PC-9 (cell line): ENCODE measurements at regions of chr11 and their contacts with region 1.

Region 1: DNA sequence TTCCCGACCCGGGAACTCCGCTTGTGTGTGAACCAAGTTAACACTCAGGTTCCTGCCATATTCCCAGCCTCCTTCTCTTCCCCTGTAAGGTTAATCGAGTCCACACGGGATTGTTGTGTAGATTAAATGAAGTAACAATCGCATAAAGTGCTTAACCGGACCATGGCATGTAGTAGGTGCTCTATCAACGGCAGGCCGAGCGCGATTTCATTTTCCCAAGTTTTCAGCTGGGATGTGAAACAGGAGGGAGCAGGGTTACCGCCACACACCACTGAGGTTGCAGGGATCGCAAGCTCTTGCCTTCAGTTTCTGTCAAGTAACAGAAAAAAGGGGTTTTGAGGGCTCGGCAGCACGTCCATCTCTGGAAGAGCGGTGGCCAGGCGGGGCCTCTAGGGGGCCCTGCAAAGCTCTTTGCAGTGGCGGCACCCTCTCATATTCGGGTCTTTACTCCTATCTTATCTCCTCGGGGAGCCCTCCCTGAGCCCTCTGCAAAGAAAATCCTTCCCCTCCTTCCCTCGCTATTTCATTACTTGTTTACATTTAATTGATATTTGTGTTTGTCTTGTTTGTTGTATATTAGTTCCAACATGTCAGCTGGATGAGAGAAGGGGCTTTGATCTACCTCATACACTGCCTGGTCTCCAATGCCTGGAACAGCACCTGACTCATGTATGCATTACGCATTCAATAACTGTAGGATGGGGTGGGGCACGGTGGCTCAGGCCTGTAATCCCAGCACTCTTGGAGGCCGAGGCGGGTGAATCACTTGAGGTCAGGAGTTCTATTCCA is 818 bp upstream of the PLEKHA7 start:
- DNase-seq: peak; percentile 57 to 88
- H3K4me3 ChIP-seq: peak overlapping the region; percentile 89
- H3K27ac ChIP-seq: peak overlapping the region; percentile 70
- H3K4me1 ChIP-seq: peaks cover 60% of the 10 kb centered on the region
- H3K27me3 ChIP-seq: no peaks in the 10 kb centered on the region
- CTCF ChIP-seq: peak; percentile 71

Region 2: DNA sequence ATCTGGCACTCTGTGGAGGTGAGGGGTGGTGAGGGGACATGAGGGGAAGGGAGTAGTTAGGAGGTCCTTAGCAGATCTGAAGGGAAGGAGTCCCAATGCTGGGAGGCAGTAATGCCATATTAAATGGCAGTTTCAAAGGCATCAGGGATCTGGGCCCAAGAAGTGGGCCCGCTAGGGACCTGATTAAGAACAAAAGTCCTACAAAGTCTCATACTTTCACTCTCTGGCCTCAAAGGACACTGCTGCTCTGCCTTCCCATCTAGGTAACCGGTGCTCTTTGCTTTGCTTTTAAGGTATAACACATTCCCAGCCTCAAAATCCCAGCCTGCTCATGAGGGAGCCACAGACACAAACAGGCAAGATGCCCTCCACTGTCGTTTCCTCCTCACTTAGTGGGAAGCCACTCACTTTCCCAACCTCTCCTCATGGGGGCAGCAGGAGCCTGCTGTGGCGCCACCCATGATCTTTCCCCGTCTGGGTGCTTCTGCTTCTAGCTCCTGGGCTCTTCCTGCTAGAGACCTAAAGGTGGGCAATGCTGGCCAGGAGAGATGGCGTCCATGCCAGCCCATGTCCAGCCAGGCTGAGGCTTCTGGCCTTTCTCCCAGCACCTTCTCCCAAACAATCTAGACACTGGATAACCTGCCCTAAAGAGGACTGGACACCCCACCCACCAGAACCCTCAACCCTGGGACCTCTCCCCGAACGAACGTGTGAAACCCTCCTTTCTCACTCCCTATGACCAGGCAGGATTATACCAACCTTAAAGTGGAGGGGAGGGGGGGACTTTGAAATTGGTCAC is 69.2 kb before region 1 on chr11:
- CTCF ChIA-PET with region 1: no interaction called
- POLR2A ChIA-PET with region 1: no interaction called
- intact Hi-C with region 1: loop called (anchors 1 kb)
- DNase-seq: peak; percentile 58 to 73
- H3K4me3 ChIP-seq: no peak overlapping the region
- H3K27ac ChIP-seq: no peak overlapping the region; the same call in 1 of the 2 replicates
- H3K4me1 ChIP-seq: peaks cover 15% of the 10 kb centered on the region
- H3K27me3 ChIP-seq: no peaks in the 10 kb centered on the region
- CTCF ChIP-seq: peak; percentile 84

Region 3: DNA sequence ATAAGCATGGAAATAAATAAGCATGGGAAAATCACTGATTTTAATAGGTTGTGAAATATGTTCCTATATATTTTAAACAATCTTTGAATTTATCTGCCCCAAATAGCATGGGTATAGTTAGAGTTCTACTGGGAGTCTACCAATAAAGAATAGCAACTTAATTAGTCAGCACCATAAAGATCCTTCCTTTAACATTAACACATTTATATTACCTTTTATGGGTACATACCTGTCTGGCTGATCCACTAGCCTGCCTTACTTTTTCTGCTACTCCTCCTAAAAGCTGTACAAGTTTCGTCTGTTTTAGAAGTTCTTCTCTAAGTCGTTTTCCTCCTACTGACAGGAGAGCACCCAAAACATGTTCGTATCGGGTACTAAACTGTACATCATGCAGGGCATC is 102.2 kb after region 1 on chr11:
- CTCF ChIA-PET with region 1: no interaction called
- POLR2A ChIA-PET with region 1: no interaction called
- intact Hi-C with region 1: no loop called
- DNase-seq: no peak
- H3K4me3 ChIP-seq: no peak overlapping the region
- H3K27ac ChIP-seq: no peak overlapping the region
- H3K4me1 ChIP-seq: no peaks in the 10 kb centered on the region
- H3K27me3 ChIP-seq: no peaks in the 10 kb centered on the region
- CTCF ChIP-seq: no peak